Activated T-helper 1 cell treated with anti-CD3 and anti-CD28 coated beads, Interleukin-12 subunit alpha, Interleukin-12 subunit beta, Interleukin-2, Interleukin-4 antibody, amounts not matched to agents 30 ng/mL and 10 ng/mL and 1 ng/mL, durations not matched to agents 14 hours and 24 hours and 36 hours (primary cell): ENCODE measurements at regions of chr1 and their contacts with region 1.

Region 1: DNA sequence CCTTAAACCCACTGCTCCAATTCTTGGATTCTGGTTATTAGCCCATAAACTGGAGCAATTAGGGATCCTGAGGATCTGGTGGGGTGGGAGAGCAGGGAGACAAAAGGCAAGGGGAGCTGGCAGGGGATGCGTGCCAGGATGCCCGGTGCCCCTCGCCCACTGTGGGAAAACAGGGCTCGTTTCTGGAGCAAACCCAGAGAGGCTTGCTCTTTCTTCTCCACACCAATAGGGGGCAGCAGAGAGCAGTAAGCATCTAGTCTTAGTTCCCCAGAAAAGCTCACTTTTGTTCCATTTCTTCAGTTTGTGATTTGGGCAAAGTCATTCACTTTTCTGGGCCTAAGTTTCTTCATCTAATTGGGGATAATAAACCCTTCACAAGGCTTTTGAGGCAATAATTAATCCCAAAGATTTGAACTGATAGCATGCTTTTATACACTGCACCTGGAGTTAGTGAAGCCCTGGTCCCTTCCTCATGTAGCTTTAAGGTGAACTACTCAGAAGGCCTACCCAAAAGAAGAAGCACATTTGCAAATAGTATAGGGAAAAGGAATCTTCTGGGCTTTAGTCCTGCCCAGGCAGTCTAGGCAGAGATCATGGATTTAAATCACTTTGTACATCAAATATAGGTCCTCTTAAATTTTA is 160.6 kb upstream of the USP24 start:
- DNase-seq: no peak
- H3K4me3 Mint-ChIP-seq: no peak overlapping the region
- H3K27ac Mint-ChIP-seq: no peak overlapping the region
- H3K4me1 Mint-ChIP-seq: peaks cover 12% of the 10 kb centered on the region
- H3K27me3 Mint-ChIP-seq: peaks cover 3% of the 10 kb centered on the region

Region 2: GRCh38 chr1:55304229-55304740 is 71.5 kb before region 1 on chr1:
- intact Hi-C with region 1: no loop called
- DNase-seq: no peak
- H3K4me3 Mint-ChIP-seq: no peak overlapping the region
- H3K27ac Mint-ChIP-seq: no peak overlapping the region
- H3K4me1 Mint-ChIP-seq: no peaks in the 10 kb centered on the region
- H3K27me3 Mint-ChIP-seq: peaks cover 8% of the 10 kb centered on the region

Region 3: GRCh38 chr1:55893155-55893554 is 517.4 kb after region 1 on chr1:
- intact Hi-C with region 1: loop called (anchors 5 kb)
- DNase-seq: no peak
- H3K4me3 Mint-ChIP-seq: no peak overlapping the region
- H3K27ac Mint-ChIP-seq: no peak overlapping the region
- H3K4me1 Mint-ChIP-seq: no peaks in the 10 kb centered on the region
- H3K27me3 Mint-ChIP-seq: peaks cover 2% of the 10 kb centered on the region

Region 4: DNA sequence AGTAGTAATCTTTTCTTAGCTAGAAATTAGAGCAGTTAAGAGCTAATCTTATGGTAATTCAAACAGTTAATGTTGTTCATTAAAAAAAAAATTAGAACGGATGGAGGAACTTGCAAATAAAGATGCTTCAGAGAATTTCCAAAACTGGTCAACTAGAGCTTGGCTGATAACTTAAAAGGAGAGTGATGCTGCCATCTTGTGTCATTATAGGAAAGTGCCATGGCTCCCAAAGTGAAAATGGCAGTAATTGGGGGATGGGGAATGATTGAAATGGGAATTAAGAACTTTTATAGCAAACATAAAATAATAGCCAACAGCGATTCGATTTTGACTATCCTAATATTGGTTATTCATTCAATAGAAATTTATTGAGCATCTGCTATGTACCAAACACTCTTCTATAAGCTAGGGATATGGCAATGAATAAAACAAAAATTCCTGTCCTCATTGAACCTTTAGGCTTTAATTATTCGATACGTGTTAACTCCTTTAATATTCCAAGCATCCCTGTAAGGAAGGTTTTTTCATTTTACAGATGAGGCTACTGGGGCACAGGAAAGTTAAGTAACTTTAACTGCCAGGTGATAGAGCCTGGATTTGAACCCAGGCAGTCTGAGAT is 1209.3 kb after region 1 on chr1:
- intact Hi-C with region 1: loop called (anchors 10 kb)
- DNase-seq: no peak
- H3K4me3 Mint-ChIP-seq: no peak overlapping the region
- H3K27ac Mint-ChIP-seq: no peak overlapping the region
- H3K4me1 Mint-ChIP-seq: no peaks in the 10 kb centered on the region
- H3K27me3 Mint-ChIP-seq: peaks cover 9% of the 10 kb centered on the region

Region 5: DNA sequence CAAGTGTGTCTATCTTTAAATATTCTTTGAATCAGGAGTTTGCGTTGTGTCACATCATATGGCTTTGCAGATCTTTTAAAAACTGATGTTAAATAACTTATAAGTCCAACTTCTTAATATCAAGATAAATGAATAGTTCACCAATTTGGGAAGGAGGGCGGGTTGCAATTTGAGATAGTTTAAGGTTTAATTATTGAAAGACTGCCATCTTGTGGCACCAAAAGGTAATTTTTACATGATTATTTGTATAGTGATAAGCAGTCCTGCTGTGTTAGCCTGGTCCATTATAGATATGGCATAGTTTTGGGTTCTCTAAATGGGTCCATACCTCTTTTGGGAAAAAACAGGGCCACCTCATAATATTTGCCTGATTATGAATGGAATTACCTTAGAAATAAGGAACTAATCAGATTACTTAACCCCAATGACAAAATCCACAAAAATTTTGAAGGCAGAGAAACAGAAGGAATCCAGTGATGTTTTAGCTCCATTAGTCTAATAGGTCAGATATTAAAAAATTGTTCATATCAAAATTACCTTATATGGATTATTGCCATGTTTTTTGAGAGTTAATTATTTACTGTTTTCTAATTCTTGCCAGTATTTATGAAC is 1333.6 kb after region 1 on chr1:
- intact Hi-C with region 1: loop called (anchors 5 kb)
- DNase-seq: no peak
- H3K4me3 Mint-ChIP-seq: no peak overlapping the region
- H3K27ac Mint-ChIP-seq: no peak overlapping the region
- H3K4me1 Mint-ChIP-seq: no peaks in the 10 kb centered on the region
- H3K27me3 Mint-ChIP-seq: peaks cover 8% of the 10 kb centered on the region